Activated CD4-positive, alpha-beta T cell treated with anti-CD3 and anti-CD28 coated beads for 36 hours (primary cell): ENCODE measurements at regions of chr9 and their contacts with region 1.

Region 1: DNA sequence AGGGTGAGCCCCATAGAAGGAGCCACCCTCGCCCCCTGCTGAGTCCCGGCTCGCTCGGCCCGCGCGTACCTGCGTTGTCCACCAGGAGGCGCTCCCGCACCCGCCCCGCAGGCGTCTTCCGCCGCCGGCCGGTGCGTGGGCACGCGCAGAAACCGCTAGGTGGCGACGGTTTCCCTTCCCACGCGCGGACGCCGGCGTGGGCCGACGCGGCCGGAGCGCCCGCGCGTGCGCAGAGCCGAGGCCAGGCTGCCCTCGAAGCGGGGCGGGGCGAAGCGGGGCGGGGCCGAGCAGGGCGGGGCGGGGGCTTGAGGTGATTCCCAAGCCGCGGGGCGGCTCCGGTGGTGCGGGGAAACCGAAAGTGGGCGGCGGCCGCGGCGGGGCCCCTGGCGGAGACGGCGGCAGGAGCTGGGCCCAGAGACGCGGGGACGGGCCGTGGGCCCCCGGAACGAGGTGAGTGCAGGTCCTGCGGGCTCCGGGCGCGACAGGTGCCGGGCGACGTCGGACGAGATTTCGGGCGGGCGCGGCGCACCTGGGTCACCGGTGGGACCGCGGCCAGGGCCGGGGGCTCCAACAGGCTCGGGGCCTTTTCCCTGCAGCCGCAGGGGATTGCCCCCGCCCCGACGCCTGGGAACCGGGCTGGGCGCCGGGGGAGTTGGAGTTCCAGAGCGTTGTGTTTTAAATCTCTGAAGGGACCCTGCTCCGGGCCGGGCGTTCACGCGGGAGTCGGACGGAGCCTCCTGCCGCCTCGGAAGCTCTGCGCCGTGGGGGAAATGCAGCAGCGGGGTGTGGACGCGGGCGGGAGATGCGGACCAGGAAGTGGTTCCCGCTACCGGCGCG is at the start of gene TDRD7:
- DNase-seq: peak; percentile 94
- ATAC-seq: peak; percentile 91
- H3K4me3 Mint-ChIP-seq: peak within 1 kb of the TSS; percentile 74
- H3K27ac Mint-ChIP-seq: peak within 1 kb of the TSS; percentile 58
- H3K4me1 Mint-ChIP-seq: peaks cover 22% of the 10 kb centered on the region
- H3K27me3 Mint-ChIP-seq: peaks cover 16% of the 10 kb centered on the region
- total RNA-seq, gene TDRD7: 9.3 TPM

Region 2: DNA sequence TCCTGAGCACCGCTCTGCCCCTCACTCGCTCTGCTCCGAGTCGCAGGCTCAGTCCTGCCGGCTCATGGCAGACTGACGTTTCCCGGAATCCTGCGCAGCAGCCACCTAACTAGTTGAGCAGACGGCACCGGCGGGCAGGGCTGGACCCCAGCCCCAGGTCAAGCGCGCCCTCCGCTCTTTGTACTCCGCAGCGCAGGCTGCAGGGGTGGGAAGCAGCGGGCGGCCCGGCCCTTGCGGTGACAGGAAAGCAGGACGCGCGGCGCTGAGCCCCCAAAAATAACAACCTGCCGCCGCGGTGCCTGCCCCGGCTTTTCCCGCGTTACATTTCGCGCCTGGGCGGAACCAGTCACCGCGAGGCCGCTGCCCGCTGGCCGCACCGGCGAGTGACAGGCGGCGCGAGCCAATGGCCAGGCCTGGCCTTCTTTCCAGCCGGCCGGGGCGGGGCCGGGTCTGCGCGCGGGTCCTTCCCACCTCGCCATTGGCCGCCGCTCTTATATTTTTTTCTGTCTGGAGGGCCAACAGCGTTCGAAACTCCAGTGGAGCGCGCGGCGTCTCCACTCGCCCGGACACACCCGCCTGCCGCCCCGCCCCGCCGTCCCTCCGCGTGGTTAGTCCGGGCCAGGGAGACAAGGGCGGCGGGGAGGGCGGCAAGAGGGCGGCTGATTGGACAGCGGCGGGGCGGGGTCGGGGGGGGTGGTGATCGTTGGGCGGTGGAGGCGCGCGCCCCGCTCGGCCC is 993.8 kb before region 1 on chr9 and contains the start of gene ZNF367:
- CTCF ChIA-PET with region 1: no interaction called
- POLR2A ChIA-PET with region 1: no interaction called
- intact Hi-C with region 1: loop called in 1 of 2 experiments (anchors 1 kb)
- DNase-seq: peak; percentile 97
- ATAC-seq: peak; percentile 81
- H3K4me3 Mint-ChIP-seq: peak within 1 kb of the TSS; percentile 93
- H3K27ac Mint-ChIP-seq: peak within 1 kb of the TSS; percentile 90
- H3K4me1 Mint-ChIP-seq: peaks cover 38% of the 10 kb centered on the region
- H3K27me3 Mint-ChIP-seq: no peaks in the 10 kb centered on the region
- total RNA-seq, gene ZNF367: 22.0 to 24.2 TPM

Region 3: GRCh38 chr9:97237951-97238851 is 173.8 kb before region 1 on chr9:
- CTCF ChIA-PET with region 1: no interaction called
- POLR2A ChIA-PET with region 1: no interaction called
- intact Hi-C with region 1: loop called in 1 of 2 experiments (anchors 5 kb)
- DNase-seq: peak; percentile 91
- ATAC-seq: peak; percentile 95
- H3K4me3 Mint-ChIP-seq: peak overlapping the region; percentile 93
- H3K27ac Mint-ChIP-seq: peak overlapping the region; percentile 97
- H3K4me1 Mint-ChIP-seq: peaks cover 12% of the 10 kb centered on the region
- H3K27me3 Mint-ChIP-seq: no peaks in the 10 kb centered on the region

Region 4: GRCh38 chr9:97398999-97399758 is 12.8 kb before region 1 on chr9:
- CTCF ChIA-PET with region 1: interaction called, 6 read pairs
- POLR2A ChIA-PET with region 1: no interaction called
- intact Hi-C with region 1: loop called in 1 of 2 experiments (anchors 1 kb)
- DNase-seq: peak; percentile 84
- ATAC-seq: peak; percentile 58
- H3K4me3 Mint-ChIP-seq: no peak overlapping the region
- H3K27ac Mint-ChIP-seq: no peak overlapping the region
- H3K4me1 Mint-ChIP-seq: peaks cover 16% of the 10 kb centered on the region
- H3K27me3 Mint-ChIP-seq: peaks cover 6% of the 10 kb centered on the region

Region 5: DNA sequence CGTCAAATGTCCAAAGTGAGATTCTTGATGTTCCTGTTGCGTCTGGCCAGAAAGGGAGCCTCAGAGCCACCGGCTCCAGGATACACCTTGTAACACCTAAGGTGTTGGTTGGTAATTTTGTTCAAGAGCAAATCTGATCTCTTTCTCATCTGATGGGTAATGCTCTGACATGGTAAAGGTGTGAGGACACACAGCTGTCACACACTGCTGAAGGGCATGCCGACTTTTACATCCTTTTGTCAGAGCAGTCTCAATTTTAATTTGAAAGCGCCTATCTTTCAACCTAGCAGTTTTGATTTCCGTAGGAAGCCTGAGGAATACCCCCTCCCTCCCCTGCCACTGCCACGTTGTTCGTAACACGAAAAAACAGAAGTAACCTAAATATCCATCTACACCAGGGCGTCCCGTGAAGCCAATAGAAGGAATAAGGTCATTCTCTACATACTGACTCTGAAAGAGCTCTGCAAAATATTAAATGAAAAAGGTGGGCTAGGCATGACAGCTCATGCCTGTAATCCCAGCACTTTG is 163.7 kb after region 1 on chr9:
- CTCF ChIA-PET with region 1: no interaction called
- POLR2A ChIA-PET with region 1: no interaction called
- intact Hi-C with region 1: loop called in 1 of 2 experiments (anchors 2 kb)
- DNase-seq: no peak
- ATAC-seq: peak; percentile 59
- H3K4me3 Mint-ChIP-seq: peak overlapping the region; percentile 81
- H3K27ac Mint-ChIP-seq: no peak overlapping the region
- H3K4me1 Mint-ChIP-seq: peaks cover 21% of the 10 kb centered on the region
- H3K27me3 Mint-ChIP-seq: no peaks in the 10 kb centered on the region

Region 6: GRCh38 chr9:97615439-97616072 is 203.5 kb after region 1 on chr9:
- CTCF ChIA-PET with region 1: interaction called, 21 read pairs
- POLR2A ChIA-PET with region 1: no interaction called
- intact Hi-C with region 1: loop called (anchors 1 to 2 kb)
- DNase-seq: peak; percentile 72
- ATAC-seq: peak; percentile 39
- H3K4me3 Mint-ChIP-seq: no peak overlapping the region
- H3K27ac Mint-ChIP-seq: no peak overlapping the region
- H3K4me1 Mint-ChIP-seq: peaks cover 15% of the 10 kb centered on the region
- H3K27me3 Mint-ChIP-seq: no peaks in the 10 kb centered on the region